PC-9 (cell line): ENCODE measurements at regions of chr6 and their contacts with region 1.

Region 1: GRCh38 chr6:13795041-13795750 is 19.2 kb downstream of the MCUR1 start:
- DNase-seq: peak; percentile 71 to 77
- H3K4me3 ChIP-seq: no peak overlapping the region
- H3K27ac ChIP-seq: peak overlapping the region; percentile 49
- H3K4me1 ChIP-seq: peaks cover 41% of the 10 kb centered on the region
- H3K27me3 ChIP-seq: no peaks in the 10 kb centered on the region
- CTCF ChIP-seq: peak; percentile 94

Region 2: GRCh38 chr6:13814176-13814937 is 19.2 kb after region 1 on chr6 and contains the start of gene MCUR1:
- CTCF ChIA-PET with region 1: no interaction called
- POLR2A ChIA-PET with region 1: interaction called, 5 read pairs
- intact Hi-C with region 1: loop called (anchors 2 kb)
- DNase-seq: peak; percentile 63 to 89
- H3K4me3 ChIP-seq: peak within 1 kb of the TSS; percentile 57
- H3K27ac ChIP-seq: peak within 1 kb of the TSS; percentile 66
- H3K4me1 ChIP-seq: peaks cover 34% of the 10 kb centered on the region
- H3K27me3 ChIP-seq: no peaks in the 10 kb centered on the region
- CTCF ChIP-seq: no peak
- total RNA-seq, gene MCUR1: 38.8 and 45.9 TPM in 2 replicates

Region 3: DNA sequence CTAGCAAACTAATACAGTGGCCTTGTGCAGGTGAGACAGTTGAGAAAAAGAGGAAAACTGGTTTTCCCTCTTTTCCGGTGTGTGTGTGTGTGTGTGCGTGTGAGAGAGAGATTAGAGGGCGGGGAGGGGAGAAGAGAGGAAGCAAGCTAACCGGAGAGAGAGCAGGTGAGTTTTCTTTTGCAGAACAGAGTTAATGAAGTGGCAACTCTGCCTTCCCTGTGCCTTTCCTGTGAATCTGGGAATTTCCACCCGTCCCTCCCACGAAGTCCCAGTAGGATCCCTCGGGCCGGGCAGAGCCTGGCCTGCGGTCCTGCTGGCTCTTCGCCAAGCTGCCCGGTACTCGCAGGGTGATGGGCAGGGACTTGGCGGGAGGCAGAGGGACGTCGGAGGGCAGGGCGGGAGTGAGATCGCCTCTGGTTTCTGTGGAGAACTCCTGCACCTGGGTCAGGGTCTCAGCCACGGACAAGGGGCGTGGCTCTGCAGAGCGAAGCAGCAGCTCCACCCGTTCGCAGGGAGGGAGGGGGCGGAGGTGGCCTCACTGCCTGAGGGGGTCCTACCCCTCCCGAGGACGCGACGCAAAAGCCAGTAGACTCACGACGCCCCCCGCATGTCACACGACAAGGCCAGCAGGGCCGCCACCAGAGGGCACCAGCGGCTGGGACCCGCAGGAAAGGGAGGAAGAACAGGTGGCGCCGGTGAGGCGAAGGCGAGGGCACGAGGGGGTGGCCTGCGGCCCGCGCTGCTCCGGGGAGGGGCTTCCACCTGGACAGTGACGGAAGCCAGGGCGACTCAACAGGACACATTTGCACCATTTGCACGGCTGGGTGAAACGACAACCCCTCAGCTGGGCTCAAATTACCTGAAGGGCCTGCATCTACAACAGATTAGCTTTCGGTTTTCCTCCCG is 78.3 kb after region 1 on chr6:
- CTCF ChIA-PET with region 1: interaction called, 7 read pairs
- POLR2A ChIA-PET with region 1: interaction called, 3 read pairs
- intact Hi-C with region 1: loop called (anchors 2 kb)
- DNase-seq: peak; percentile 72 to 91
- H3K4me3 ChIP-seq: peak overlapping the region; percentile 60
- H3K27ac ChIP-seq: peak overlapping the region; percentile 67
- H3K4me1 ChIP-seq: peaks cover 20% of the 10 kb centered on the region
- H3K27me3 ChIP-seq: no peaks in the 10 kb centered on the region
- CTCF ChIP-seq: peak; percentile 89

Region 4: GRCh38 chr6:13971303-13971702 is 176.1 kb after region 1 on chr6:
- CTCF ChIA-PET with region 1: no interaction called
- POLR2A ChIA-PET with region 1: no interaction called
- intact Hi-C with region 1: no loop called
- DNase-seq: no peak
- H3K4me3 ChIP-seq: no peak overlapping the region
- H3K27ac ChIP-seq: no peak overlapping the region
- H3K4me1 ChIP-seq: no peaks in the 10 kb centered on the region
- H3K27me3 ChIP-seq: no peaks in the 10 kb centered on the region
- CTCF ChIP-seq: no peak

Region 5: DNA sequence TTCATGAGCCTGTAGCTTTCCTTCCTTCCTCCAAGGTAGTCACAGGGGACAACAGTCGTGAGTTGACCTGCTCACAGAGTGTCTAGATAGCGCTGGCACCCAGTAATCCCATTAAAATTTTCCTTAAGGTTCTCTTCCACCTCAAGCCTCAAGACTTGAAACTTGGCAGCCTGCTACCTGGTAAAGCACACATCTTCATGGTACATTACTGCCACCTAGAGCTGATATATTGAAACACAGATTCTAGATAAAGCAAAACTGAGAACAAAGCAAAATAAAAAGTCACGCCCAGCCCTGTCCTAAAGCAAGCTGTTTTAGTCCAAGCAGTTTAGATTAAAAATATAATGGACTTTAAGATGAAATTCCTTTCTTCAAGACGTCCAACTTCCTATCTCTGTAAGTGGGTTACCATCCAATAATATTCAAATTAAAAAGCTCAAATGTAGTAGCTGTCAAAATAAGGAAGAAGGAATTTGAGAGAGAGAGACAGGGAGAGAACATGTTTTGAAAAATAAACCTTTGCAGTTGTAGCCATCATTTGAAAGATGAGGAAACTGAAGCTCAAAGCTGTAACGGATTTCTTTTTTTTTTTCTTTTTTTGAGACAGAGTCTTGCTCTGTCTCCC is 271.7 kb after region 1 on chr6:
- CTCF ChIA-PET with region 1: interaction called, 3 read pairs
- POLR2A ChIA-PET with region 1: no interaction called
- intact Hi-C with region 1: loop called (anchors 1 kb)
- DNase-seq: peak in 1 of 2 experiments; percentile 57
- H3K4me3 ChIP-seq: no peak overlapping the region
- H3K27ac ChIP-seq: no peak overlapping the region
- H3K4me1 ChIP-seq: peaks cover 26% of the 10 kb centered on the region
- H3K27me3 ChIP-seq: no peaks in the 10 kb centered on the region
- CTCF ChIP-seq: peak; percentile 86

Region 6: GRCh38 chr6:14144678-14145113 is 349.5 kb after region 1 on chr6:
- CTCF ChIA-PET with region 1: no interaction called
- POLR2A ChIA-PET with region 1: no interaction called
- intact Hi-C with region 1: loop called (anchors 1 kb)
- DNase-seq: peak in 1 of 2 experiments; percentile 65
- H3K4me3 ChIP-seq: no peak overlapping the region
- H3K27ac ChIP-seq: no peak overlapping the region
- H3K4me1 ChIP-seq: peaks cover 12% of the 10 kb centered on the region
- H3K27me3 ChIP-seq: no peaks in the 10 kb centered on the region
- CTCF ChIP-seq: peak; percentile 95